SK-N-SH (cell line): ENCODE measurements at regions of chr1 and their contacts with region 1.

Region 1: DNA sequence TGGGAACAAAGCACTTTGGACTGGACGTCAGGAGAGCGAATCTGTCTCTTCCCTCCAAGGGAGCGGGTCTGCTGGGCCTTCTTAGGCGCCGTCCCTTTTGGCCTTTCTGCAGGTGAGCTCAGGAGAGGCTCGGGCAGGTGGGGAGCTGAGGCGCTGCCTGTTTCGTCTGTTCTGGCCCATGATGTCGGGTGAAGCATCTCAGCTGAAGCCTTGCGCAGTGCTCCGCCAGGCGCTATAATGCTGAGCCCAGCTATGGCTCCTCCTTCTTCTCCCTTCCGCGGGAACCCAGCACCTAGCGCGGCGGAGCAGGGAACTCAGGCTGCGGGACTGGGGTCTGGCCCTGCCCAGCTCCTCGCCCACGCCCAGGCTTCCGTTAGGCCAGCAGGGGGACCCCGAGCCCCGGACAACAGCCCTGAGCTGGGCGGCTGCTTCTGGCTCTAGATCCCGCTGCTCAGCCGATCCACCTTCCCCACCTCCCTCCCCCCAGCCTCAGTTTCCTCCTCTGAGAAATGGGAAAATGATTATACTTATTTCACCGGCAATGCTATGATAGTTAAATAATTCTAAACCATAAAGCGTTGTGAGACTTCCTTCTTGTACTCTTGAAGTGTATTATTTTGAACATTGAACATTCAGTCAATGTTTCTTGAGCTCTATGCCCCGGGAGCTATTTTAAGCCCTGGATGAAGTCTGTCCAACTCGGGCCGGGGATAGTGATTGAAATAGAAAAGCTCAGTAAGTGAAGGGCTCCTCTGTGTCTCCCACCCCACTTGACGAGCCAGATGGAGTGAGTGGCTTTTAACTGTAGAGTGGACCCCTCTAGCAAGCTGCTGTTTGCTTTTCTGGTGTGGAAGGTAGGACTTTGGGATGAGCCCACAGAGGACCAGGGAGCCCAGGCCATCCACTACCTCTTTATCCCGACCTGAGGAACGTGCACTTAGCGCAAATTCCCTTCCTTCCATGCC is 9.6 kb upstream of the ADORA1 start:
- DNase-seq: peak; percentile 95
- H3K4me3 ChIP-seq: peak overlapping the region in 1 of 2 experiments; percentile 35; a peak in 1 of 4 replicates
- H3K27ac ChIP-seq: no peak overlapping the region
- H3K4me1 ChIP-seq: no peaks in the 10 kb centered on the region; a peak in 1 of 4 replicates
- H3K27me3 ChIP-seq: peaks cover 11% of the 10 kb centered on the region
- CTCF ChIP-seq: peak; percentile 76
- EP300 ChIP-seq: no peak
- RAD21 ChIP-seq: peak; percentile 95

Region 2: GRCh38 chr1:203038891-203039608 is 78.8 kb before region 1 on chr1:
- CTCF ChIA-PET with region 1: interaction called, 396 read pairs
- POLR2A ChIA-PET with region 1: no interaction called
- DNase-seq: peak; percentile 84
- H3K4me3 ChIP-seq: no peak overlapping the region; a peak in 1 of 4 replicates
- H3K27ac ChIP-seq: peak overlapping the region in 1 of 2 experiments; percentile 50; a peak in 1 of 4 replicates
- H3K4me1 ChIP-seq: peaks cover 20 to 42% of the 10 kb centered on the region in 2 experiments; a peak in 3 of 4 replicates
- H3K27me3 ChIP-seq: no peaks in the 10 kb centered on the region
- CTCF ChIP-seq: peak; percentile 97
- EP300 ChIP-seq: no peak
- RAD21 ChIP-seq: peak; percentile 93

Region 3: GRCh38 chr1:203084588-203085502 is 33.0 kb before region 1 on chr1:
- CTCF ChIA-PET with region 1: interaction called, 12 read pairs
- POLR2A ChIA-PET with region 1: no interaction called
- DNase-seq: no peak
- H3K4me3 ChIP-seq: no peak overlapping the region; a peak in 1 of 4 replicates
- H3K27ac ChIP-seq: no peak overlapping the region
- H3K4me1 ChIP-seq: no peaks in the 10 kb centered on the region; a peak in 1 of 4 replicates
- H3K27me3 ChIP-seq: no peaks in the 10 kb centered on the region; the same call in 1 of the 2 replicates
- CTCF ChIP-seq: peak; percentile 57
- EP300 ChIP-seq: no peak
- RAD21 ChIP-seq: no peak

Region 4: DNA sequence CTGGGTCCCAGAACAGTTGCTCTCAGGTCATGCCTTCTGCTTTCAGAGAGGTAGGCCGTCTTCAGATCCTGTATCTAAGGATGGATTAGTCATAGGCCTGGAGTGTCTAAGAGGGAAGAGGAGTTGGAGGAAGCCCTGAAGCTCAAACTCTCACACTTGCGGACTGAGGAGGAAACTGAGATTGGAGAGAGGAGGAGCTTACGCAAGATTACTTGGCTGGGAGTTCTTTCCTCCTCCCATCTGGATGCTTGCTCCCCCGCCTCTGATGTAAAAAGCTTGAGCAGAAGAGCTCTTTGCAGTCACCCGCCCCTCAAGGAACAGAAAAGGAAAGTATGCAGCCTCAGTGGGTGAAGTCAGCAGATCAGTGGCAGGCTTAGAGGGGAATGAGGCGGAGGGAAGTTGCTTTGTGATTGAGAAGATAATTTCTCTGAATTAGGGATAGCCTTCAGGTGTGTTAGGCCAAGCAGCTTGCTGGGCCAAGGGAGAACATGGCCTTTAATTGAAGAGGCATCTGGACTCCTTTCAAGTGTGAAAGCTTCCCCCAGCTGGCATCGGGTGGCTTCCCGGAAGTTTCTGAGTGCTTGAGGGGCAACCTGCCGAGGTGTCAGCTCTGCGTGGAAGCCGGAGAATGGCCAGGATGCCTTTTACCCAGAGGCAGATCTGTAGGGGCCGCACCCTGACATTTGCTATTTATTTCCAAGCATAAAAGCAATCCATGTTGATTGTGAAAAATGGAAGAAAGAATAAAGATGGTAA is 16.3 kb after region 1 on chr1:
- CTCF ChIA-PET with region 1: interaction called, 26 read pairs
- POLR2A ChIA-PET with region 1: no interaction called
- DNase-seq: no peak
- H3K4me3 ChIP-seq: no peak overlapping the region
- H3K27ac ChIP-seq: no peak overlapping the region
- H3K4me1 ChIP-seq: peaks cover 5 to 38% of the 10 kb centered on the region in 2 experiments; a peak in 2 of 4 replicates
- H3K27me3 ChIP-seq: no peaks in the 10 kb centered on the region
- CTCF ChIP-seq: no peak
- EP300 ChIP-seq: no peak
- RAD21 ChIP-seq: no peak

Region 5: DNA sequence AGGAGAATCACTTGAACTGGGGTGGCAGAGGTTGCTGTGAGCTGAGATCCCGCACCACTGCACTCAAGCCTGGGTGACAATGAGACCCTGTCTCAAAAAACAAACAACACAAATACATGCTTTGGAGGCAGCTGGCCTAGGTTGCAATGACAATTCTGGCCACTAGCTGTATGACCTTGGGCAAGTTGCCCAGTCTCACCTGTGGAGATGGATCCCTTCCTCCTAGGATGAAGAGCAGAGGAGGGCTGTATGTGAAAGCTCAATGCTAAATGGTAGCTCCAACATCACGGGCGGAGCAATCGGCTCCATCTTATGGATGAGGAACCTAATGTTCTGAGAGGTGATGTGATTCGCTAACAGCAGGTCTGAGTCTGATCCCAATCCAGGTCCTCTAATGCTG is 30.2 kb after region 1 on chr1:
- CTCF ChIA-PET with region 1: interaction called, 16 read pairs
- POLR2A ChIA-PET with region 1: no interaction called
- DNase-seq: no peak
- H3K4me3 ChIP-seq: no peak overlapping the region
- H3K27ac ChIP-seq: no peak overlapping the region
- H3K4me1 ChIP-seq: peaks cover 18 to 48% of the 10 kb centered on the region in 2 experiments; a peak in 3 of 4 replicates
- H3K27me3 ChIP-seq: no peaks in the 10 kb centered on the region
- CTCF ChIP-seq: peak; percentile 51
- EP300 ChIP-seq: no peak
- RAD21 ChIP-seq: no peak

Region 6: GRCh38 chr1:203172128-203173010 is 54.5 kb after region 1 on chr1:
- CTCF ChIA-PET with region 1: interaction called, 49 read pairs
- POLR2A ChIA-PET with region 1: interaction called, 3 read pairs
- DNase-seq: peak; percentile 77
- H3K4me3 ChIP-seq: no peak overlapping the region
- H3K27ac ChIP-seq: no peak overlapping the region
- H3K4me1 ChIP-seq: peaks cover 5 to 7% of the 10 kb centered on the region in 2 experiments; a peak in 2 of 4 replicates
- H3K27me3 ChIP-seq: no peaks in the 10 kb centered on the region
- CTCF ChIP-seq: peak; percentile 69
- EP300 ChIP-seq: no peak
- RAD21 ChIP-seq: peak; percentile 66

Region 7: DNA sequence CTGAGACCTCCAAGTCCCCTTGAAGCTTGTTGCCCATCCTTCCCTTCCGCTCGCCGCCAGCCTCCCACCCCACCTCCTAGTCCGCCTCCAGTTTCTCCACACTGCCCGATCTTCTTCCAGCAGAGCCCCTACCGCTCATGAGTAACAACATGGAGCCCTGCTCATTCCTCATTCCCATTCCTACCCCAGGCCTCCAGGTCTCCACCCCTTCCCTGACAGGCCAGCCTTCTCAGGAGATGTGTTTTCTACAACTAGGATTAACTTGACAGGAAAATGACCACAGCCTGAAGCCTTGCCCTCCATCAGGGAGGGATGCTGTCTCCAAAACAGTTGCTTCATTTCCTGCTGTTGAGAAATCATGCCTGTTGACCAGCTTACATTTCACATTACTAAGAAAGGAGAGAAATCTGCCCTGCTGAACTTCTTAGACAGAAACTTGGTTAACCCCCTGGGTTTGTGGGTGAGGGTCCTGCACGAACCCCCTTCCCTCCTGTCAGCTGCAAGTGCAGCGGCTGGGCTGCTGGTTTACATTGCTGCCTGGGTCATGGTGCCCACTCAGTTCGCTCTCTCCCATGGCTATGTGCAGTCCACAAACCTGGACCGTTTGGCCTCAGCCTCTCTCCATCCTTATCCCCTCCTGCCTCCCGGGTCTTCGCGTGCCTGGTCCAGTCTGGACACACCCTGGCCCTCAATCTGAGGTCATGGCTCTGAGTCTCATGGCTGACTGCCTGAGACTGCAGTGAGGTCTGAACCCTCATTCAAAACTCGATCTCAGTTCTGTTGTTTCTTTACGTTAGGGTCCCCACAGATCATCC is 84.7 kb after region 1 on chr1:
- CTCF ChIA-PET with region 1: interaction called, 602 read pairs
- POLR2A ChIA-PET with region 1: no interaction called
- DNase-seq: no peak
- H3K4me3 ChIP-seq: no peak overlapping the region
- H3K27ac ChIP-seq: no peak overlapping the region
- H3K4me1 ChIP-seq: no peaks in the 10 kb centered on the region; a peak in 1 of 4 replicates
- H3K27me3 ChIP-seq: peaks cover 9% of the 10 kb centered on the region; the same call in 1 of the 2 replicates
- CTCF ChIP-seq: no peak
- EP300 ChIP-seq: no peak
- RAD21 ChIP-seq: no peak